ENCODE measurements at regions of chr16 and their contacts with region 1.

Region 1: GRCh38 chr16:8797364-8798173 is at the starts of genes PMM2 and TMEM186:
- DNase-seq: peak; percentile 90
- H3K4me3 ChIP-seq: peak within 1 kb of the TSS; percentile 74
- H3K27me3 ChIP-seq: no peaks in the 10 kb centered on the region
- CTCF ChIP-seq: no peak
- polyA plus RNA-seq, gene PMM2: 30.4 and 32.2 TPM in 2 replicates
- polyA plus RNA-seq, gene TMEM186: 5.9 and 7.9 TPM in 2 replicates

Region 2: DNA sequence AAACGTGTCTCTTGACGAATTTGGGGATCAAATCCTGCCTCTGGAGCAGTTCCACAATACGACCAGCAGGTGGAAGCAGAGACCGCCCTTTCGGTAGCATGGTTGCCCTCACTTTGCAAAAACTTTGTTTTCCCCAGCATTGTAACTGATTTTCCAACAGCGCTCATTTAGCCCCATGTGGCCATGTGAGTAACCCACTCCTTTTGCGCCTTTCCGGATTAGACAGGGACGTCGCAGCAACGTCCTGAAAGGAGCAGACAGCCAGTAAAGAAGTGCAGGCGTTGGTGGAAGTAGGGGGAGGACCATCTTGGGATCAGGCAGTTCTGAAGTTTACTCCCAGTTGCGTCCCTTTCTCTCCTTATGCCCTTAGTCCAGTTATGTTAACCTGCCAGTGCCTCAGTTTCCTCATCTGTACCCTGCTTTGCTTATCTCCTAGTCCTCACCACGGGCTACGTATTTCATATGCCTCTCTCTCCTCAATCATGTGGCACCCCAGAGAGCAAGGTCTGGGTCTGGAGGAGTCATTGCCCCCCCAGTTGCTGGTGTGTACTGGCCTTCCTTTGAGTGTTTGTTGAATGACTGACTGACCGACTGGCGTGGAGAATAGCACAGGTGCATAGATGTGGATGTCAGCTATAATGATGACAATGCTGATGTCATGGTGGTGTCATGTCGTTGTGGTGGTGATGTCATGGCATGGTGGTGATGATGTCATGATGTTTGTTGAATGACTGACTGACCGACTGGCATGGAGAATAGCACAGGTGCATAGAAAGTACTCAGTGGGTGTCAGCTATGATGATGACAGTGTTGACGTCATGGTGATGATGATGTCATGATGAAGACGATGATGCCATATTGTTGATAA is 229.6 kb before region 1 on chr16:
- CTCF ChIA-PET with region 1: interaction called, 10 read pairs
- POLR2A ChIA-PET with region 1: no interaction called
- DNase-seq: peak; percentile 22
- H3K4me3 ChIP-seq: no peak overlapping the region
- H3K27me3 ChIP-seq: no peaks in the 10 kb centered on the region; the same call in 1 of the 2 replicates
- CTCF ChIP-seq: peak; percentile 92

Region 3: DNA sequence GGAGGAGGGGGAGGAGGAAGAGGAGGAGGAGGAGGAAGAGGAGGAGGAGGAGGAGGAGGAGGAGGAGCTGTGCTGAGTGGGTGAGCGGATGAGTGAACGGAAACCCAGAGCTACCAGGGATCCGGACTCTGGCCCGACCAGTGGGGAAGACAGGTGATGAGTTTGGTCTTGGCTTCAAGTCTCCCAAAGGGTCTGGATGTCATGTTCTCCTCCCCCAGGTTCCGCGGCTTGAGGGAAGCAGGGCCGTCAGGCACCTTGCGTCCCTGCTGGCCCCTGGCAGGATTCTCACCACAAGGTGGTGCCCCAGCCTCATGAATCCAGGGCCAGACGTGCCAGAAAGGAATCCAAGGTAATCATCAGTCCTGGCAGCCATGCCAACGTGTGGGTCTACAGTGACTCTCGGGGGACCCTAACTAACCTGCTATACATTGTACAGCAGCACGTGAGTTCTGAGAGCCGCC is 136.7 kb before region 1 on chr16:
- CTCF ChIA-PET with region 1: interaction called, 28 read pairs
- POLR2A ChIA-PET with region 1: no interaction called
- DNase-seq: no peak
- H3K4me3 ChIP-seq: no peak overlapping the region
- H3K27me3 ChIP-seq: no peaks in the 10 kb centered on the region; the same call in 1 of the 2 replicates
- CTCF ChIP-seq: peak; percentile 73